ENCODE measurements at regions of chr12 and their contacts with region 1.

Region 1: GRCh38 chr12:49515266-49515665 is 23.6 kb upstream of the KCNH3 start:
- DNase-seq: no peak
- H3K4me3 ChIP-seq: no peak overlapping the region
- CTCF ChIP-seq: no peak

Region 2: DNA sequence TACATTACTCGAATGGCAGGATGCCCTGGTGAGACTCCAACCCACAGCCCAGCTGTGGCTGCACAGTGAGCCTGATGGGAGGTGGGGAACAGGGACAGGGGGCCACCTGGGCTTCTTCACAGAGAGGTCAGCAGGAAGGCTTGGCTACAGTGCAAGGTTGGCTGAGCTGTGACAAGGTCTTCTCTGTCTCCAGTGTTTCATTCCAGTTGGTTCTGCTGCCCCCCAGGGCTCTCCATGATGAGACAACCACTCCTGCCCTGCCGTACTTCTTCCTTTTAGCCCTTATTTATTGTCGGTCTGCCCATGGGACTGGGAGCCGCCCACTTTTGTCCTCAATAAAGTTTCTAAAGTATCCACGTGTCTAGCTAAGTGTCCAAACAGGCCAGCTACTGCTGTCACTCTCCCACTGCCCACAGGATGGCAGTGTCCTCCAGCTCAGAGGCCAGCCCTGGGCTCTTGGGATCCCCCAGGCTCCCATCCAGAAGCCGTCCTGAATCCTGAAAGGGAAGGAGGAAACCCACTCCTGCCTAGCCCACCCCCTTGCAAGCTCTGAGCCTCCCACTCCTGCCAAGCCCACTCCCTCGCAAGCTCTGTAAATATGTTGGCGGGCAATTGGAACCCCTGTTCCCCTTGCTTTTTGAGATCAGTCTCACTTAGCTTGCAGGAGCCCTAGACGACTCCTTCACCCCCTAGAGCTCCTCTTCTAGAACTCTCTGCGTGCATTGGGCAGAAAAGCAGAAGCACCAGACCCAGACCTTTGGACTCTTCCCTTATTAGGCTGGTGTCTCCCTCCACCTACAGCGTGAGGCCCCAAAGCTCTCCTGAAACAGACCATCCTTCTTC is 183.7 kb before region 1 on chr12:
- CTCF ChIA-PET with region 1: interaction called, 148 read pairs
- POLR2A ChIA-PET with region 1: no interaction called
- DNase-seq: no peak
- H3K4me3 ChIP-seq: no peak overlapping the region
- CTCF ChIP-seq: peak; percentile 84

Region 3: GRCh38 chr12:49336645-49337584 is 178.4 kb before region 1 on chr12 and contains the start of gene C1QL4:
- CTCF ChIA-PET with region 1: interaction called, 148 read pairs
- POLR2A ChIA-PET with region 1: no interaction called
- DNase-seq: no peak
- H3K4me3 ChIP-seq: peak within 1 kb of the TSS; percentile 54
- CTCF ChIP-seq: peak; percentile 93

Region 4: GRCh38 chr12:49342066-49342913 is 173.0 kb before region 1 on chr12:
- CTCF ChIA-PET with region 1: interaction called, 1,125 read pairs
- POLR2A ChIA-PET with region 1: no interaction called
- DNase-seq: no peak
- H3K4me3 ChIP-seq: peak overlapping the region; percentile 45
- CTCF ChIP-seq: peak; percentile 67

Region 5: DNA sequence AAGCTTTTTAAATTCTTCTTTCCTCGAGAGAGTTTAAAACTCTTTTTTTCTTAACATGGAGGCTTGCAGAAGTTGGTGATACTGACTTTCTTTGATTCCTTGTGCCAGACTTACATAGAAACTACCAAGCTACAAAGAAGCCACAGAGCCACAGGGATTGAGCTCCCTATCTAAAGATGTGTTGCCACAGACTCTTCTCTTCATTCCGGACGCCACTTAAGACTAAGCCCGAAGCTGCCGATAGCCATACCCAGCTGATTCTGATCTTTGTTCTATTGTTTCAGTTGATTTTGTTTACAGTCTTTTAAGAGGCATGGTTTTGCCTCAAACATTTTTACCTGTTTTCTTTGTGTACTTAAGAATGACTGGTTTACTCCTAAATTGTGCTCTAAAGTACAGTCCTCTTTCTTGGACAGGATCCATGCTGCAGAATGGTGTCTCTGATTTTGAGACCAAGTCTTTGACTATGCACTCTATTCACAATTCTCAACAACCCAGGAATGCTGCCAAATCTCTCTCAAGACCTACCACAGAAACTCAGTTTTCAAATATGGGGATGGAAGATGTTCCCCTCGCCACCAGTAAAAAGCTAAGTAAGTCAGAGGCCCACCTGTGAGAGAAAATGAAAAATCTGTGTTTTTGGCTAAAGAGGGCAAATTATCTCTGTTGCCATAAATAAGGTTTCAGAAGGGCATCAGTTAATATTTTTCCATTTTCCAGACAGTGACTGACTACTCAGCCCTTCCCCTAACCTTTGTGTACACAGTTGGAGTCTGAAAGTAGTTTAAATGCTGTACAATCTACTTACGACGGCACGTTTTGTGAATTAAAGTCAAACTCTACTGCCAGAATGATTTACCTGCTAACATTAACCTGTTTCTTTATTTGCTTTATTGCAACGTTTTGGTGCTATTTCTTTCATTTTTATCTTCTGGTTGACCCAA is 18.6 kb before region 1 on chr12:
- CTCF ChIA-PET with region 1: interaction called, 29 read pairs
- POLR2A ChIA-PET with region 1: no interaction called
- DNase-seq: no peak
- H3K4me3 ChIP-seq: no peak overlapping the region
- CTCF ChIP-seq: no peak

Region 6: DNA sequence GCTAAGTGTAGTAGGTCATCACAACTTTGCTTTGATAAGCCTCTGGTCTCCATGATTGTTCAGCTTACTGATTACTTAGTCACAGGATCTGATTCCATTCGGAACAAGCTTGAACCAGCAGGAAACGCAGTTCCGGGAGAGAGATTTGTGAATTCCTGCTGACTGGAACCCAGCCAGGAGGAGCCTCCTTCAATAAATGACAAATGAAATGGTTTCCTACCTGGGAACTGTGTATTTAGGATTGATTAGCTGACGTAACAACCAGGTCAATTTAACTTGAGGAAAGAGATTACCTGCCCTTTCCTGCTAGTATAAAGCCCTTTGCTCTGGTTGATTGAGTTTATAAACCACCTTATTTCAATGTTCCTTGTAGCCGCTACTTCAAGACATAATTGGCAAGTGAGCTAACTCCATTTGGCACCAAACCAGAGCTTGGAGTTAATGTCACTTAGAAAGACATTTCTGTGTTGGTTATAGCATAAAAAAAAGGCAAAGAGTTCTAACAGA is 11.5 kb before region 1 on chr12:
- CTCF ChIA-PET with region 1: interaction called, 44 read pairs
- POLR2A ChIA-PET with region 1: no interaction called
- DNase-seq: no peak
- H3K4me3 ChIP-seq: no peak overlapping the region
- CTCF ChIP-seq: no peak

Region 7: DNA sequence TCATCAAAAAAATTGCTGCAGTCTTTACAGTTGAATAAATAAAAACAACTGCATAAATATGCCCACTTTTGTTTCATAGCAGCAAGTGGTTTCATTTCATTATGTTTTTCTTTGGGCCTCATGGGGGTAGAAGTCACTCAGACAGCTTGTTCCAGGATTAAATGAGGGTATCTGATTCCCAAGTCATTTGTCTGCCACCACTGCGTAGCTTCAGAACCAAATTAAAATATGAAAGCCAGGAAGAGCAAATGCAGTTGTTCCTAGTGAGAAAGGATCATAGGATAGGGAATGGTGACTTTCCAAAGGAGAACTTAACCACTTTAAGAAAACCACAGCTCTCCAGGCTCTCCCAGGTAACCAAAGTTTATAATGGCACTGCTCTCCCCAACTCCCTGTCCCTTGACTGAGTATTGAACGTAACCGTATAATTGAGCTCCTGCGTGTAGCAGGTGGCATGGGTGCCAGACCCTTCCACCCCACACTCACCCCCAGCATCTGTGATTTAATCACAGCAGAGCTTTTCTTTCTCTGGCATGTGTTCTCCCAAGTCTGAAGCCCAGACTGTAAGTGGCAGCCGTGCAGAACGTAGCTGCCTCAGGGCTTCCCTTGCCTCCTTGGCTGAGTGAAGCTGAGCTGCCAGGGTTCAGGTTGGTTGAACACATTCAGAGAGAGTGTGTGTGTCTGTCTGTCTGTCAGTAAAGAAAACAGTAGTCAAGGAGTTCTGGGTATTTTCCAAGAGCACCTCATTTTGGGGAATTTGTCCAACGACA is 12.3 kb after region 1 on chr12:
- CTCF ChIA-PET with region 1: interaction called, 44 read pairs
- POLR2A ChIA-PET with region 1: no interaction called
- DNase-seq: no peak
- H3K4me3 ChIP-seq: no peak overlapping the region
- CTCF ChIP-seq: no peak